Cardiac septum (tissue), 1 donor: ENCODE measurements at regions of chr14 and their contacts with region 1.

Region 1: DNA sequence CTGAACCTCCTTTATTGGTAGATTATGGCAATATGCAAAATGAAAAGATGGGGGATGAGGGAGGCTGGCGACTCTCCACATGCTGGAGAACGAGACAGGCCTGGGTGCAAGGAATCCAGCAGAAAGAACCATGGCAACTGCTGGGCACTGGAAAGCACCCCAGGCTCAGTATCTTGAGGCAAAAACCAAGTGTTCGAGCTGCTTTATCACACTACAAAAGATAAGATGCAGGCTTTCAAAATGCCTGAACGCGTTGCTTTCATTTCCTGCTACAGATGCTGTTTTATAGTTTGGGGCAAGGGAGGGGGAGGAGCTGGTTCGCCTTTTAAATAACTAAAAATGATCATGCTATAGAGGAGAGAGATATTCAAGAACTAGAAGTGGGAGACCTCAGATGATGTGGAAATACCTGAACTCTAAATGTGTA is 38.9 kb downstream of the NIN start:
- DNase-seq: no peak

Region 2: GRCh38 chr14:50830932-50831725 is 39.1 kb after region 1 on chr14 and contains the start of gene NIN:
- intact Hi-C with region 1: loop called (anchors 2 kb)
- DNase-seq: peak; percentile 89
- total RNA-seq, gene NIN: 59.2 TPM